ENCODE measurements at regions of chr22 and their contacts with region 1.

Region 1: GRCh38 chr22:39039306-39040126 is 1.1 kb upstream of the APOBEC3F start:
- DNase-seq: no peak
- ATAC-seq: no peak
- H3K4me3 ChIP-seq: no peak overlapping the region
- H3K4me3 Mint-ChIP-seq: peak overlapping the region; percentile 63 to 88 (median 79)
- H3K27ac ChIP-seq: peak overlapping the region; percentile 77
- H3K27ac Mint-ChIP-seq: peak overlapping the region; percentile 62 to 93 (median 82)
- H3K4me1 ChIP-seq: peaks cover 8 to 18% of the 10 kb centered on the region in 2 donors
- H3K4me1 Mint-ChIP-seq: peaks cover 24 to 48% (median 39%) of the 10 kb centered on the region in 7 donors
- H3K27me3 ChIP-seq: no peaks in the 10 kb centered on the region
- H3K27me3 Mint-ChIP-seq: no peaks in the 10 kb centered on the region

Region 2: GRCh38 chr22:39013942-39014722 is 25.4 kb before region 1 on chr22 and contains the start of gene APOBEC3C:
- CTCF ChIA-PET with region 1: no interaction called
- POLR2A ChIA-PET with region 1: interaction called, 3 read pairs
- intact Hi-C with region 1: loop called in 1 of 2 experiments (anchors 1 kb)
- DNase-seq: peak; percentile 28 to 78 (median 59)
- ATAC-seq: peak; percentile 95
- H3K4me3 ChIP-seq: peak within 1 kb of the TSS; percentile 81
- H3K4me3 Mint-ChIP-seq: peak within 1 kb of the TSS; percentile 88 to 99 (median 94)
- H3K27ac ChIP-seq: peak within 1 kb of the TSS; percentile 87
- H3K27ac Mint-ChIP-seq: peak within 1 kb of the TSS; percentile 82 to 98 (median 95)
- H3K4me1 ChIP-seq: peaks cover 9 to 10% of the 10 kb centered on the region in 2 donors
- H3K4me1 Mint-ChIP-seq: peaks cover 12 to 51% (median 37%) of the 10 kb centered on the region in 7 donors
- H3K27me3 ChIP-seq: no peaks in the 10 kb centered on the region
- H3K27me3 Mint-ChIP-seq: no peaks in the 10 kb centered on the region
- total RNA-seq, gene APOBEC3C: 16.4 to 102 (median 20.5) TPM

Region 3: GRCh38 chr22:39021552-39022250 is 17.8 kb before region 1 on chr22:
- CTCF ChIA-PET with region 1: no interaction called
- POLR2A ChIA-PET with region 1: interaction called, 6 read pairs
- intact Hi-C with region 1: loop called in 1 of 2 experiments (anchors 2 kb)
- DNase-seq: peak in 1 of 9 donors; percentile 18
- ATAC-seq: no peak
- H3K4me3 ChIP-seq: peak overlapping the region; percentile 76
- H3K4me3 Mint-ChIP-seq: peak overlapping the region; percentile 91 to 98 (median 94)
- H3K27ac ChIP-seq: peak overlapping the region; percentile 86
- H3K27ac Mint-ChIP-seq: peak overlapping the region; percentile 88 to 98 (median 96)
- H3K4me1 ChIP-seq: peaks cover 18 to 24% of the 10 kb centered on the region in 2 donors
- H3K4me1 Mint-ChIP-seq: peaks cover 29 to 73% (median 54%) of the 10 kb centered on the region in 7 donors
- H3K27me3 ChIP-seq: no peaks in the 10 kb centered on the region
- H3K27me3 Mint-ChIP-seq: no peaks in the 10 kb centered on the region

Region 4: GRCh38 chr22:39097098-39098020 is 57.8 kb after region 1 on chr22 and contains the start of gene APOBEC3H:
- CTCF ChIA-PET with region 1: no interaction called
- POLR2A ChIA-PET with region 1: interaction called, 5 read pairs
- intact Hi-C with region 1: loop called in 1 of 2 experiments (anchors 5 kb)
- DNase-seq: peak in 1 of 9 donors; percentile 46
- ATAC-seq: no peak
- H3K4me3 ChIP-seq: peak within 1 kb of the TSS; percentile 24
- H3K4me3 Mint-ChIP-seq: peak within 1 kb of the TSS in 8 of 10 donors; percentile 17 to 91 (median 54)
- H3K27ac ChIP-seq: peak within 1 kb of the TSS; percentile 48
- H3K27ac Mint-ChIP-seq: peak within 1 kb of the TSS in 7 of 9 donors; percentile 51 to 94 (median 78)
- H3K4me1 ChIP-seq: peaks cover 48 to 80% of the 10 kb centered on the region in 2 donors
- H3K4me1 Mint-ChIP-seq: peaks cover 19 to 78% (median 64%) of the 10 kb centered on the region in 7 donors
- H3K27me3 ChIP-seq: no peaks in the 10 kb centered on the region
- H3K27me3 Mint-ChIP-seq: no peaks in the 10 kb centered on the region
- total RNA-seq, gene APOBEC3H: 0.29 to 31.3 (median 1.5) TPM in 4 of 5 experiments, not detected in the other

Region 5: DNA sequence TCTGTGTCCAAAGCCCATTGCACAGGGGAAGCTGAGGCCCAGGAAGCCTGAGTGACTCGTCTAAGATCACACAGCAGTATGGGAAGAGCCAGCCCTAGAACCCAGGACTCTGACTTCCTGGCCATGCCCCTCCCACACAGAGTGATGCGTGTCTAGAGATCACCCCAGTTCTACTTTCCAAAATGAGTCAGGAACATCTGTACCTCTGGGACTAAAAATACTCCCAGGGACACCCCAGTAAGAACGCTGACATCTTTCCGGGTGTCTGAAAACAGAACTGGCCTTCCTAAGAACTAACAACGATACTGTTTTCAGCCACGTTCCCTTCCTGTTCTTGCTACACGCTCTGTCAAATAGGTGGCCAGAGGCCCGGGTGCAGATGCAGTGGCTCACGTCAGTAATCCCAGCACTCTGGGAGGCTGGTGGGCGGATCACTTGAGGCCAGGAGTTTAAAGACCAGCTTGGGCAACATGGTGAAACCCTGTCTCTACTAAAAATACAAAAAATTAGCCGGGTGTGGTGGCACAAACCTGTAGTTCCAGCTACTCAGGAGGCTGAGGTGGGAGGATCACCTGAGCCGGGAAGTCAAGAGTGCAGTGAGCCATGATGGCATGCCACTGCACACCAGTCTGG is 227.0 kb after region 1 on chr22:
- CTCF ChIA-PET with region 1: no interaction called
- POLR2A ChIA-PET with region 1: no interaction called
- intact Hi-C with region 1: no loop called
- DNase-seq: peak in 1 of 9 donors; percentile 68
- ATAC-seq: peak; percentile 65
- H3K4me3 ChIP-seq: no peak overlapping the region
- H3K4me3 Mint-ChIP-seq: peak overlapping the region in 1 of 10 donors; percentile 48
- H3K27ac ChIP-seq: no peak overlapping the region
- H3K27ac Mint-ChIP-seq: peak overlapping the region in 2 of 9 donors; percentile 58 to 93
- H3K4me1 ChIP-seq: no peaks in the 10 kb centered on the region
- H3K4me1 Mint-ChIP-seq: peaks cover 0 to 26% (median 0%) of the 10 kb centered on the region in 7 donors
- H3K27me3 ChIP-seq: no peaks in the 10 kb centered on the region
- H3K27me3 Mint-ChIP-seq: peaks cover 0 to 9% (median 4%) of the 10 kb centered on the region in 5 donors